H1 (cell line): ENCODE measurements at regions of chr5 and their contacts with region 1.

Region 1: DNA sequence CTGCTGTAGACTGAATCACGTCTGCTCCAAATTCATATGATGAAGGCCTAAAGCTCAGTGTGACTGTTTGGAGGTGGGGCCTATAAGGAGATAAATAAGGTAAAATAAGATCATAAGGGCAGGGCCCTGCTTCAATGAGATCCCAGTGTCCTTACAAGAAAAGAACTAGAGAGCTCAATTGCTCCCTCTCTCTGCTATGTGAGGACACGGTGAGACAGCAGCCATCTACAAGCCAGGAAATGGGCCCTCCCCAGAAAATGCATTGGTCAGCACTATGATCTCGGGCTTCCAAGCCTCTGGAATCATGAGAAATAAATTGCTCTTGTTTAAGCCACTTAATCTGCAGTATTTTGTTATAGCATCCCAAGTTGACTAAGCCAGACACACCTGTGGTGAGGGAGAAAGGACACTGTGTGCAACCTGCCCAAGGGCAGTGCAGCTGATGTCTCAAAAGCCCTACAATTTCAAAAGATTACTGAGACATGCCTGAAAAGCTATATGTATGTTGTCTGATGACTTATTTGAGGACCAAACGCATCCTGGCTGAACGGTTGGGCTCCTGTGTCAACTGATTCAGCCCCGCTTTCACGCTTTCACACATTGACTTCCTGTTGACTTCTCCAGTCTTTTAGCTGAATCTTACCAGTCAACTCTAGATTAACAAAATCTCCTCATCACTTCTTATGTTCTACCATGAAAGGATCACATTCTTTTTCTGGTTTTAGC is 13.2 kb downstream of the GZMK start:
- DNase-seq: peak; percentile 10 to 46
- H3K4me3 ChIP-seq: no peak overlapping the region
- H3K27ac ChIP-seq: no peak overlapping the region
- H3K4me1 ChIP-seq: 0 out of 7 replicates have a peak, but pooled peaks cover 0 to 3% (median 0%) of the 10 kb centered on the region in 4 experiments
- H3K27me3 ChIP-seq: no peaks in the 10 kb centered on the region
- CTCF ChIP-seq: peak; percentile 9 to 56 (median 34)
- EP300 ChIP-seq: no peak
- POLR2A ChIP-seq: no peak
- RAD21 ChIP-seq: peak; percentile 41 to 54

Region 2: GRCh38 chr5:54944364-54944763 is 92.8 kb before region 1 on chr5:
- CTCF ChIA-PET with region 1: interaction called, 20 read pairs
- POLR2A ChIA-PET with region 1: no interaction called
- DNase-seq: no peak
- H3K4me3 ChIP-seq: no peak overlapping the region
- H3K27ac ChIP-seq: no peak overlapping the region
- H3K4me1 ChIP-seq: no peaks in the 10 kb centered on the region
- H3K27me3 ChIP-seq: no peaks in the 10 kb centered on the region
- CTCF ChIP-seq: peak in 2 of 3 experiments; percentile 24 to 51; a peak in 2 of 4 replicates
- EP300 ChIP-seq: no peak
- POLR2A ChIP-seq: no peak
- RAD21 ChIP-seq: peak; percentile 34 to 38; a peak in 3 of 4 replicates

Region 3: DNA sequence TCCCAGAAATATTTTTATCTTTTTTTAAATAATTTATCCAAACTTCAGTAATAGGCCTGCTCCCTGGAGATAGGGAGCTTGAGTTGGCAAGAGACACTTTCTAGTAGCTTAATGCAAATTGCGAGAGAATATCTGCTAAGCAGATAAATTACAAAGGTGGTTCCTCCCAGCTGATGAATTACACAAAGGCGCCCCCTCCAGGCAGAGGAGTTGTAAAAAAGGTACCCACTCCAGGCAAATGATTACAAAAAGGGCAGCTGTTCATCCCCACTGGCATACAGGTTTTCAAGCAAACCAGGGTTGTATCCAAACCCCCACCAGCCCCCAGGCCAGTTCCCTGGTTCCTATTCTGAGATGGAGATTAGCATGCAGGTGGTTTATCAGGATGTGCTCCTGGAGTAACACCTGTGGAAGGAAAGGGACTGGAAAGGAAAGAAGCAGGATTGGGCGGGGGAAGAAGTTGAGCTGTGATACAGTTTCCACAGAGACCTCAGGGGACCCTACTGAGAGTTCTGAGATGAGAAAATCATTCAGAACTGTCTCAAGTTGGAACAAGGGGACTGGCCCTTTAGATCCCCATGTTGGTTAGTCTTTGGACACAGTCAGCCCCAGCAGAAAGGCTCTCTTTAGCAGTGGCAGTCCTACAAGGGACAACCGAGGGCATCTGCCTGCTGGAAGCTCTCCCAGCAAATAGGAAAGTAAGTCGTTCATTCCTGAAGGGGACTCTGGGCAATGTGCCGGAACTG is 77.4 kb before region 1 on chr5:
- CTCF ChIA-PET with region 1: interaction called, 22 read pairs
- POLR2A ChIA-PET with region 1: no interaction called
- DNase-seq: peak; percentile 7 to 76
- H3K4me3 ChIP-seq: no peak overlapping the region
- H3K27ac ChIP-seq: no peak overlapping the region
- H3K4me1 ChIP-seq: no peaks in the 10 kb centered on the region
- H3K27me3 ChIP-seq: no peaks in the 10 kb centered on the region
- CTCF ChIP-seq: peak; percentile 10 to 63 (median 57)
- EP300 ChIP-seq: no peak
- POLR2A ChIP-seq: no peak
- RAD21 ChIP-seq: peak; percentile 54 to 69

Region 4: DNA sequence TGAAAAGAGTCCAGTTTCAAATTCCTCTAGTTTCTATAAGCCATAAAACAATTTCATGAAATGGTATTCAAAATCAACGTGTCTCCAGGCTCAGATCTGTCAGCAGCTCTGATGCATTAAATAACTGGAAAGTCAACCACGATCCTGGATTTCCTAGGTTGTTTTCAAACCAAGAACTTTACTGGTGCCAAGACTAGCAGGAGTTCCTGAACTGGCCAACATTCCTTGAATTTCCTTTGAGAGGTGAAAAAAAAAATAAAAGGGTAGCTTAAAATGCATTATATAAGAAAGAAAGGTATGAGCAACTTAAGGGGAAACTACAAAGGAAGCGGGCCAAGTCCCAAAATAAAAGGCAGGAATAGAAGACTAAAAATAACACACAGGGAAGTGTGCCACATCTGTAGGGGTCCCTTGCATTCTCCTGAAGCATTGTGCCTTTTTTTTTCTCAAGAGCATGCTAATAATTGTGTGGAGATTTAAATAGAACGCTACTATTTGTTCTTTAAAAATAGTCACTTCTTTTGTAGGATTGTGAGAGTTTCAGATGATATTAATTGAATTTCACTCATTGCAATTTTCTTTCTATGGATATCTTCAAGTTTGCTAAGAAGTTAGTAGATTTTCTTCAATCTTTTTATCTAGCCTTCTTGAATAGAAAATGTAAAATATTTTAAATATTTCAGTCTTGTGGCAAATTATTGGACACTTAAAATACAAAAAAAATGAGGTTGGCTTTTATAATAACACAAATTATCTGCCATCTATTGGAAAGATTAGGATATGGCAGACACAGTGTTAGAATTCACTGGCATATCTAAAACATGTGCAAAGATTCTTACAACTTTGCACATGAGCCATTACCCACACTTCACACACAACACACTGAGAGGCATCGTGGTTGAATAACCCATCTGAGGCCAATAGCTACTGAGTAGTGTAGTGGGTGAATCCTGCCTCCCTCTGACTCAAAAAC is 67.1 kb before region 1 on chr5:
- CTCF ChIA-PET with region 1: interaction called, 14 read pairs
- POLR2A ChIA-PET with region 1: no interaction called
- DNase-seq: no peak
- H3K4me3 ChIP-seq: no peak overlapping the region
- H3K27ac ChIP-seq: no peak overlapping the region
- H3K4me1 ChIP-seq: no peaks in the 10 kb centered on the region
- H3K27me3 ChIP-seq: no peaks in the 10 kb centered on the region
- CTCF ChIP-seq: no peak
- EP300 ChIP-seq: no peak
- POLR2A ChIP-seq: no peak
- RAD21 ChIP-seq: no peak

Region 5: DNA sequence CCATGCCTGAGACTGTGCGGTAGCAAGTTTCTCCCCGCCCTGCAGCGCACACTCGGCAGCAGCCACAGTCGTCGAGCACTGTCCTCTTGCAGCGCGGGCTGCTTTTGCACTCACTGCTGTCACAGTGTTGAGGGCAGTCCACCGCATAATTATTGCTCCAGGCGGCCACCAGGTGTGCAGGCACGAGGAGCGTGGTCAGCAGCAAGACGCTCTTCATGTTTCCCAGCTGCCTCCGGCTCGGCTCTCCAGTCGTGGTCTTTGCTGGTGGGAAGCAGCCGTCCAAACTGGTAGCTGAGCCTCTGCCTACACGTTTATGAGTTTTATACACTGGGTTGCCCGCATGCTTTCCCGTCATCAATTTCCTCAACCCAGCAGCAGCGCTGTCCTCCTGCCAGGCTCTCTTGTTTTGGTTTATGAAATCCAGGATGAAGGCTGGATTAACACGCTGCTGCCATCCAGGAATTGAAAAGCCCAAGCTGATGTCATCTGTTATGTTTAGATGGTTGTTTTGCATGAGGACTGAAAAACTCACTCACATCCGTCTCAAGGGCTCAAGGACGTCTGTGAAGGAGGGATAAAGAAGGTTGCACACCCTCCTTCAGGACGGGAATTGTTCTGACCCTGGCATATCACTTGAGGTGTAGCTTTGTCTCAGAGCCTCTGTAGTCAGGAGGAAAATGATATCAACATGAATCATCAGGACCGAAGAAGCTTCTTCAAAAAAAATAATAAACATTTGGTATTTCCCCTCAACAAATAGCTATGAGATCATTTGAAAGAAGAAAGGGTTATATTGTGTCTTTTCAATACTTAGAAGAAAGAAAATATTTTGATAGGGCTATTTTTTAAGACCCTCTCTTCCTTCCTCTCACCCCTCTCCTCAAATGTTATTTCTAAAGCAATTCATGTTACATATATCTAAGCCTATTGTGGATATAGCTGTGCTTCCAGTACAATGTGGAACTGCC is 51.6 kb before region 1 on chr5 and contains the start of gene ESM1:
- CTCF ChIA-PET with region 1: interaction called, 10 read pairs
- POLR2A ChIA-PET with region 1: no interaction called
- DNase-seq: no peak
- H3K4me3 ChIP-seq: no peak within 1 kb of the TSS
- H3K27ac ChIP-seq: no peak within 1 kb of the TSS
- H3K4me1 ChIP-seq: peaks cover 0 to 4% (median 2%) of the 10 kb centered on the region in 4 experiments; a peak in 4 of 7 replicates
- H3K27me3 ChIP-seq: no peaks in the 10 kb centered on the region
- CTCF ChIP-seq: no peak
- EP300 ChIP-seq: no peak
- POLR2A ChIP-seq: no peak
- RAD21 ChIP-seq: no peak
- total RNA-seq, gene ESM1: not detected in 2 replicates

Region 6: GRCh38 chr5:55021410-55021809 is 15.8 kb before region 1 on chr5:
- CTCF ChIA-PET with region 1: interaction called, 28 read pairs
- POLR2A ChIA-PET with region 1: no interaction called
- DNase-seq: no peak
- H3K4me3 ChIP-seq: no peak overlapping the region
- H3K27ac ChIP-seq: no peak overlapping the region
- H3K4me1 ChIP-seq: no peaks in the 10 kb centered on the region
- H3K27me3 ChIP-seq: no peaks in the 10 kb centered on the region
- CTCF ChIP-seq: no peak
- EP300 ChIP-seq: no peak
- POLR2A ChIP-seq: no peak
- RAD21 ChIP-seq: no peak

Region 7: DNA sequence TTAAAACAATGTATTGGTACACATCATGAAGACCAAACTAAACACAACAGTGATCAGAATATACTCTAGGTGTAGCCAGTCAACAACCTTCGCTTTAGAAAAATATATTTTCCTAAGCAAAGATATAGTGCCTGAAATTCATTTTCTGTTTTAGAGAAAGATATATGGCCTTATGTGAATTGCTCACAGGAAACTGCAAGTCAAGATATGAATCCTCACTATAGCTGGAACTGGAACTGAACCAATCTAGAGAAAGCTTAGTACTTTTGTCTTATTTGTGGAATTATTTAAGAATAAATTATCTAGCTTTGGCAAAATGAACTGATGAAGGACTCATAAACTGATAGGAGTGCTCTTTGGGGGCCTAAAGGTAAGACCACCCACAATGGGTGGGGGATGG is 14.1 kb after region 1 on chr5:
- CTCF ChIA-PET with region 1: interaction called, 38 read pairs
- POLR2A ChIA-PET with region 1: no interaction called
- DNase-seq: no peak
- H3K4me3 ChIP-seq: no peak overlapping the region
- H3K27ac ChIP-seq: no peak overlapping the region
- H3K4me1 ChIP-seq: no peaks in the 10 kb centered on the region
- H3K27me3 ChIP-seq: no peaks in the 10 kb centered on the region
- CTCF ChIP-seq: no peak
- EP300 ChIP-seq: no peak
- POLR2A ChIP-seq: no peak
- RAD21 ChIP-seq: no peak

Region 8: DNA sequence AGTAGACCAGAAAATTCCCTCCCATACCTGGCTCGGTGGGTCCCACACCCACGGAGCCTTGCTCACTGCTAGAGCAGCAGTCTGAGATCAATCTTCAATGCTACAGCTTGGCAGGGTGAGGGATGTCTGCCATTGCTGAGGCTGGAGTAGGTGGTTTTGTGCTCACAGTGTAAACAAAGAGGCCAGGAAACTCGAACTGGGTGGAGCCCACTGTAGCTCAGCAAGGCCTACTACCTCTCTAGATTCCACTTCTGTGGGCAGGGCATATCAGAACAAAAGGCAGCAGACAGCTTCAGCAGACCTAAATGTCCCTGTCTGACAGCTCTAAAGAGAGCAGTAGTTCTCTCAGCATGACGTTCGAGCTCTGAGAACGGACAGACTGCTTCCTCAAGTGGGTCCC is 59.7 kb after region 1 on chr5:
- CTCF ChIA-PET with region 1: no interaction called
- POLR2A ChIA-PET with region 1: no interaction called
- DNase-seq: no peak
- H3K4me3 ChIP-seq: no peak overlapping the region
- H3K27ac ChIP-seq: no peak overlapping the region
- H3K4me1 ChIP-seq: no peaks in the 10 kb centered on the region
- H3K27me3 ChIP-seq: no peaks in the 10 kb centered on the region
- CTCF ChIP-seq: no peak
- EP300 ChIP-seq: no peak
- POLR2A ChIP-seq: no peak
- RAD21 ChIP-seq: no peak